ENCODE measurements at regions of chr10 and their contacts with region 1.

Region 1: DNA sequence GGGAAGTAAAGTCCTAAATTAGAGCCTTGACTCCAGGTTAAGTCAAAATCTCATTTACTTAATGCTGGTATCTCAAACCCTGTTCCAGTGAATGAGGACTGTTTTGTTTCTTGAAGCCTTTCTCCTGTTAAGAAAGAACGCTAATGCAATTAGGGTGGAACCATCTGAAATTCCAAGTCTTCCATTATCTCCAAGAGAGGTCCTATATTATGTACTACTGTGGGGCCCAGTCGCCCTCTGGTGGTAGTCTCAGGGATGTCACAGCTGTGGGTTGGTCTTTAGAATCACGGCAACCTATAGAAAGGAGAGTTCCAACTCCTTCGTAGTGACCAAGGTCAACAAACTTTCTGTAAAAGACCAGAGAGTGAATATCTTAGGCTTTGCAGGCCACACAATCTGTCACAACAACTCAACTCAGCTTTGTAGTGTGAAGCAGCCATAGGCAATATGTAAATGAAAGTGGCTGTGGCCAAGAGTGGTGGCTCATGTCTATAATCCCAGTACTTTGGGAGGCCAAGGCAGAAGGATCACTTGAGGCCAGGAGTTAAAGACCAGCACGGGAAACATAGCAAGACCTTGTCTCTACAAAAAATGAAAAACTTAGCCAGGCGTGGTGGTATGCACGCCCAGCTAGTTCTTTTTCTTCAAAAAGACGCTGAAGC is 9.3 kb downstream of the RPP38 start:
- DNase-seq: peak; percentile 72
- H3K4me3 Mint-ChIP-seq: no peak overlapping the region
- H3K27ac Mint-ChIP-seq: peak overlapping the region; percentile 30
- H3K4me1 Mint-ChIP-seq: peaks cover 7% of the 10 kb centered on the region
- H3K27me3 Mint-ChIP-seq: no peaks in the 10 kb centered on the region

Region 2: GRCh38 chr10:15122477-15123030 is 16.1 kb after region 1 on chr10:
- CTCF ChIA-PET with region 1: interaction called, 10 read pairs
- POLR2A ChIA-PET with region 1: interaction called, 3 read pairs
- DNase-seq: no peak
- H3K4me3 Mint-ChIP-seq: peak overlapping the region; percentile 35
- H3K27ac Mint-ChIP-seq: peak overlapping the region; percentile 82
- H3K4me1 Mint-ChIP-seq: peaks cover 56% of the 10 kb centered on the region
- H3K27me3 Mint-ChIP-seq: no peaks in the 10 kb centered on the region

Region 3: GRCh38 chr10:15150563-15150962 is 44.1 kb after region 1 on chr10:
- CTCF ChIA-PET with region 1: no interaction called
- POLR2A ChIA-PET with region 1: no interaction called
- DNase-seq: no peak
- H3K4me3 Mint-ChIP-seq: no peak overlapping the region
- H3K27ac Mint-ChIP-seq: no peak overlapping the region
- H3K4me1 Mint-ChIP-seq: peaks cover 14% of the 10 kb centered on the region
- H3K27me3 Mint-ChIP-seq: no peaks in the 10 kb centered on the region

Region 4: GRCh38 chr10:15209827-15210509 is 103.5 kb after region 1 on chr10:
- CTCF ChIA-PET with region 1: no interaction called
- POLR2A ChIA-PET with region 1: no interaction called
- DNase-seq: peak; percentile 82
- H3K4me3 Mint-ChIP-seq: no peak overlapping the region
- H3K27ac Mint-ChIP-seq: no peak overlapping the region
- H3K4me1 Mint-ChIP-seq: peaks cover 51% of the 10 kb centered on the region
- H3K27me3 Mint-ChIP-seq: no peaks in the 10 kb centered on the region

Measured in activated CD4-positive, alpha-beta memory T cell treated with anti-CD3 and anti-CD28 coated beads, Interleukin-2, amount 10 ng/mL, durations not matched to agents 7 days and 5 days (primary cell).